ENCODE measurements at regions of chrX and their contacts with region 1.

Region 1: GRCh38 chrX:115330498-115331168 is 41.1 kb downstream of the LUZP4 start:
- DNase-seq: no peak
- ATAC-seq: peak; percentile 62

Region 2: DNA sequence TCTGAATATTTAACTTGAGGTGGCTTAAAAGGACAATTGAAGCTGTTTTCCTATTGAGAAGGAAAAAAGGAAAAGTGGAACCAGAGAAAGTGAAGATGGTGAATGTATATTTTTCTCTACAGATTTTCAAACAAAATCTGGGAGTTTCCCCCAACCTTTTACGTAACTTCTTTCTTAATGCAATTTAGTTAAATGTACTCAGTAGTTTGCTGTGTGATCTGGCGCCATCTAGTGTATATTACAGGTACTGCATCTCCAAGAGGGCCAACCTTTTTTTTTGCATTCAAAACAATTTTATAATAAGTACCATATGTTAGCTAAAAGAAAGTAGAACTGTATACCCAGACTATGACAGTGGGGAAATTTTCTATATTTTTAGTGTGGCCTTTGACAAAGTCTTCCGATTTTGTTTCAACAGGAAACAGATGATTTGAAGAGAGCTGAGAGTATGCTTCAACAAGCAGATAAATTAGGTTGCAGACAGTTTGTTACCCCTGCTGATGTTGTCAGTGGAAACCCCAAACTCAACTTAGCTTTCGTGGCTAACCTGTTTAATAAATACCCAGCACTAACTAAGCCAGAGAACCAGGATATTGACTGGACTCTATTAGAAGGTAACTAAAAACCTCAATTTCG is 312.4 kb after region 1 on chrX:
- intact Hi-C with region 1: loop called (anchors 5 kb)
- DNase-seq: no peak
- ATAC-seq: peak; percentile 43

Region 3: DNA sequence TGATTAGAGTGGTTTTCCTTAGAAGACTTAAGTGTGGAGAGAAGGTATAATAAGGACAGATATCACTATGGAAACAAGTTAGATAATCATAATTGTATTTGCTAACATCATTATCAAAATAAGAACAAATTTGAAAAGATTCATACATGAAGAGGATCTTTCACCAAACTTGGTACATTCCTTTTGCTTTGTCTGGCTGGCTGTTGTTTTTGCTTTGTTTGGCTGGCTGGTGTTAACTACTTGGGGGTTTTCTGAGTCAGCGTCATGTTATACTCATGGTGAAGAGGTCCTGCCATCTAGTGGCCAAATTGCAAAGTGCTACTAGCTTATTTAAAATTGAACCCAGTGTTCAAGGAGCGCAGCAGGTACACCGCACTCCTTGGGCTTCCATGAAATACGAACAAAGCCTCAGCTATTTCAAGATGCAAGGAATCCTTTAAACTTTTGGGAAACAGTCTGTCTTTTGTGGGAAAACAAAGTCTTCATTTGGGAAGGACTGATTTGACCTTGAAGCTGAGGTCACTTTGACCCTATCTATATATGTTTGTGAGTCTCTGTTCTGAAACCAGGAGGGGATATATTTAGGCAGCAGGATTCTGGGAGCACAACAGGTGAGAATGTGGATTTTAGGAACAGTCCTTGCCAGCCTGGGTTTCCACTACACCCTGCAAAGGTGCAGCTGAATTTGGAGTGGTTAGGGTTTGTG is 360.0 kb after region 1 on chrX:
- intact Hi-C with region 1: loop called (anchors 5 kb)
- DNase-seq: no peak
- ATAC-seq: peak; percentile 75

Measured in Right ventricle myocardium superior (tissue), 1 donor.